ENCODE measurements at regions of chr12 and their contacts with region 1.

Region 1: DNA sequence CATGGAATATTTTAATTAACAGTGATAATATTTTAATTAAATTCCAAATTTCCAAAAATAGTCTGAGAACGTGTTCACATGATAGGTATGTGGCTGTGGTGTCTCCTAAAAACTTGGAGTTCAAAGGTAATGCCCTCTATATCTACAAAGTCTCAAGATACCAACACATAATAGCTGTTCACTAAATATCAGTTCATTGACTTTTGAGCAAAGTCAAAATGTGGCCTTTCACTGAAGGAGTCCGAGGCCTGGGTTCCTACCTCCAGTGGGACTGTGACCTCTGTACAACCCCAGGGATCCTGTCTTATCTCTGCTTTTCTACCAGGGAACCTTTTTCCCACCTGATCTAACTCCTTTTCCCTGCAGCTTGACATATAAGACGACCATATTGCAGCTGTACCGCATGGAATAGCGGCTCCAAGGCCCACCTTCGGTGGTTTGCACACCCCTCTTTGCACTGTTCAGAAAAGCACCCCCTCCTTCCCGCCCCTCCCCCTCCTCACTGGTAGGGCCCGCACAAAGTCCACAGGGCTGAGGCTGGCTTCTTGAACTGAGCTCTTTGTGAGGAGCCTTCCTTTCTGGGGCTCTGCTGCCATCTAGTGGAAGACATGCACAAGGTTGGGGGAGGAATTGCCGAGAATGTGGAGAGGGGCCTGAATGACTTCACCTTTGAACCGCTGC is 3.1 kb downstream of the CCND2 start:
- DNase-seq: peak; percentile 94 to 95
- H3K4me3 ChIP-seq: no peak overlapping the region
- H3K4me3 Mint-ChIP-seq: peak overlapping the region; percentile 98
- H3K27ac Mint-ChIP-seq: peak overlapping the region; percentile 94
- H3K4me1 ChIP-seq: peaks cover 46% of the 10 kb centered on the region
- H3K4me1 Mint-ChIP-seq: peaks cover 52% of the 10 kb centered on the region
- H3K27me3 ChIP-seq: peaks cover 13% of the 10 kb centered on the region
- H3K27me3 Mint-ChIP-seq: peaks cover 24% of the 10 kb centered on the region
- CTCF ChIP-seq: peak; percentile 97 to 98

Region 2: DNA sequence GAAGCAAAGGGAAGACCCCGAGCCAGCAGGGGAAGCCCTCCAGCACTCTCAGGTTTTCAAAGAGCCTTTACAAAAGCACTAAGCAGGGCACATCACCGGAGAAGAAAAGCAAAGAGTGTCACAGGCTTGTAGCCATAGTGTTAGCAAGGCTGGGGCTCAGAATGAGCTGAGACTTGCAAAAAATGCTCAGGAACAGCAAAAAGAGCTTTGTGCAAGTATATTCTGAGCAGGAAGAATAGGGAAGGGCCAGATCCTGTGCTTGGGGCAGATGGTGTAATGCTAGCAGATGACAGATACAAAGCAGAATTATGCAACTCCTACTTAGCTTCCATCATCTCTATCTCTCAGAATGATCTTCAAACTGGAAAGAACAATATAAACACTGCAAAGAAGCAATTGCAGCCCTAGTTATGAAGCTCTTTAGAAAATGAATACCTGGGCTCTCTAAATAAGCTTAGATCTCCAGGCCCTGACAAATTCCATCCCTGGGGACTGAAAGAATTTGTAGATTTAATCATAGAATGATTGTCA is 379.8 kb before region 1 on chr12:
- CTCF ChIA-PET with region 1: interaction called, 17 read pairs
- POLR2A ChIA-PET with region 1: no interaction called
- intact Hi-C with region 1: no loop called
- DNase-seq: peak; percentile 71 to 77
- H3K4me3 ChIP-seq: no peak overlapping the region
- H3K4me3 Mint-ChIP-seq: no peak overlapping the region
- H3K27ac Mint-ChIP-seq: peak overlapping the region; percentile 57
- H3K4me1 ChIP-seq: peaks cover 42% of the 10 kb centered on the region
- H3K4me1 Mint-ChIP-seq: peaks cover 22% of the 10 kb centered on the region
- H3K27me3 ChIP-seq: no peaks in the 10 kb centered on the region
- H3K27me3 Mint-ChIP-seq: no peaks in the 10 kb centered on the region
- CTCF ChIP-seq: no peak

Region 3: DNA sequence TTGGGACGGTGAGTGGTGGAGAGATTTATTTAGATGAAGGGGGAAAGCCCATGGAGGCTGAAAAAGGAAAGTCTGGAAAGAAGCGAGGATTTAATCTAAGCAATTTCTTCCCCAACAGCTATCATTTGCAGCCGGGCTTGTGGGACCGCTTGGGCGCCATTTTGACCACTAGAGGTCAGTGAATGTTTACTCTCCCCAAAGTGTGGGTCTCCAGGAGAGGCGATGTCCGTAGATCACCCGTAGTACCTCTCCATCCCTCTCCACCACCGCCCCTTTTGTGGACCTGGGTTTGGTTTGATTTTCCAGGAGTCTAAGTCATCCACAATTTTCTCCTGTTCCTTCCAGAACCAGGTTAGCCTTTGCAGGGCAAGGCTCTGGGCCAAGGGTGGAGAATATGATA is 312.2 kb before region 1 on chr12:
- CTCF ChIA-PET with region 1: interaction called, 13 read pairs
- POLR2A ChIA-PET with region 1: no interaction called
- intact Hi-C with region 1: loop called (anchors 1 kb)
- DNase-seq: peak; percentile 58 to 61
- H3K4me3 ChIP-seq: no peak overlapping the region
- H3K4me3 Mint-ChIP-seq: no peak overlapping the region
- H3K27ac Mint-ChIP-seq: no peak overlapping the region
- H3K4me1 ChIP-seq: peaks cover 64% of the 10 kb centered on the region
- H3K4me1 Mint-ChIP-seq: peaks cover 61% of the 10 kb centered on the region
- H3K27me3 ChIP-seq: no peaks in the 10 kb centered on the region
- H3K27me3 Mint-ChIP-seq: no peaks in the 10 kb centered on the region
- CTCF ChIP-seq: peak; percentile 51 to 74

Region 4: DNA sequence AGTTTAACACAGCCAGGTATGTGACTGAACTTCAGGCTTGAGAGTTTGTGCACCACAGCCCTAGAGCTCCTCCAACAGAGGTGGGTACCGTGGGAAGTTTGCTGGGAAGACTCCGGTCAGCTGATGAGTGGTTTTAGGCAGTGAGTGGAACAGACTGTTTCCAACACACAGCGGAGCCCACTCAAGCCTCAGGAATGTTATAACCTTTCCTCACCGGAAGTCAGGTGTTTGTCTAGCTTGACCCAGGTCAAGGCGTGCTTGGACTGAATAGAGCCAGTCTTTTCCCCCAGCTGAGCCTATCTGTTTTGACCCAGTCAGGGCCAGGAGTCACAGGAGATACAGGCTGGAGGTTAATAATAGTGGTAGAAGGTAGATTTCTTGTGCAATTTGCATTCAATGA is 265.1 kb before region 1 on chr12:
- CTCF ChIA-PET with region 1: interaction called, 18 read pairs
- POLR2A ChIA-PET with region 1: interaction called, 3 read pairs
- intact Hi-C with region 1: loop called (anchors 1 kb)
- DNase-seq: peak; percentile 86 to 91
- H3K4me3 ChIP-seq: no peak overlapping the region
- H3K4me3 Mint-ChIP-seq: peak overlapping the region; percentile 12
- H3K27ac Mint-ChIP-seq: peak overlapping the region; percentile 35
- H3K4me1 ChIP-seq: peaks cover 68% of the 10 kb centered on the region
- H3K4me1 Mint-ChIP-seq: peaks cover 57% of the 10 kb centered on the region
- H3K27me3 ChIP-seq: no peaks in the 10 kb centered on the region
- H3K27me3 Mint-ChIP-seq: no peaks in the 10 kb centered on the region
- CTCF ChIP-seq: no peak

Region 5: DNA sequence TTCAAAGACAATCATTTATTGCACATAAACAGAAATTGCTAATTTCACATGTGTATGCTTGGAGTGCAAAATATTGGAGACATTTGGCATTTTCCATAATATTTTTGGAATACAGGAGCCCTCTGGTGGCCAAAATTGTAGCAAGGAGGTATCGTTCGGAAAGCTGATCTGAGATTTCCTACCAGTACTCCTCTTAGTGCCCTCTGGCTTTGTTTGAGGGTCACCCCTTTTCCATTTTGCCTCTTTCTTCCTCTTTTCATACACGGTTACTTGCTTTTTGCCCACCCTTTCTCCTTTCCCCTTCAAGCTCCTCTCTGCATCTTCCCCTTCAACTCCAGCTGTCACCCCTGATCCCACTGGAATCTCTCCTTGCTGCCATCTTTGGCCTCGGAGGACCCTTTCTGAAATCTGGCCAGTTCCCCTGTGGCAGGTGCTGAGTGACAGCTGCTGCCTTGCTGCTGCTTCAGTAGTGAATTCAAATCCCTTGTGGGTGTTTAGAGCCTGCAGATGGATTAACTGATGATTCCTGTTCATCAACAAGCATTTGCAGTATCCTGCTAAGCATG is 238.8 kb before region 1 on chr12:
- CTCF ChIA-PET with region 1: interaction called, 50 read pairs
- POLR2A ChIA-PET with region 1: no interaction called
- intact Hi-C with region 1: loop called (anchors 1 kb)
- DNase-seq: peak; percentile 54 to 82
- H3K4me3 ChIP-seq: no peak overlapping the region
- H3K4me3 Mint-ChIP-seq: no peak overlapping the region
- H3K27ac Mint-ChIP-seq: no peak overlapping the region
- H3K4me1 ChIP-seq: peaks cover 36% of the 10 kb centered on the region
- H3K4me1 Mint-ChIP-seq: peaks cover 38% of the 10 kb centered on the region
- H3K27me3 ChIP-seq: no peaks in the 10 kb centered on the region
- H3K27me3 Mint-ChIP-seq: no peaks in the 10 kb centered on the region
- CTCF ChIP-seq: peak; percentile 89 to 95

Region 6: DNA sequence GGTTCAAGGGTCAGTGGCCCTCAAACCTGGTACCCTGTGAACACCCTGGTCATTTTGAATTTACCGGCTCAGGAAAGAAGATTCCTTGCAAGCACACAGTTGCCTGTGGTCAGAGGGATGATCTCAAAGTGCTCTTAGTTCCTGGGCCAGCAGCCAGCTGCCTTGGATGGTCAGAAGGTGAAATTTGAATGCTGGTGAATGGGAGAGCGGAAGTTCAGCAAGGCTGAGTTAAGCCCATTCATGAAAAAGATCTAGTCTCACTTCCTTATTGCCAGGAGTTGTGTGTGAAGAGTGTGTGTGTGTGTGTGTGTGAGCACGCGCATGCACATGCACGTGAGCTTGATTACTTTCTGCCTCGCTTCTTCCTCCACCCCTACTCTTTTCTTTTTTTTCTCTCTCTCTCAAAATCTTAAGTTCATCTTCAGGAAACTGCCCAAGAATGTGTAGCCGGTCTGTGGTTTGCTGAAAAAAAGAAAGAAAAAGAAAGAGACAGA is 158.6 kb before region 1 on chr12:
- CTCF ChIA-PET with region 1: interaction called, 29 read pairs
- POLR2A ChIA-PET with region 1: no interaction called
- intact Hi-C with region 1: no loop called
- DNase-seq: no peak
- H3K4me3 ChIP-seq: no peak overlapping the region
- H3K4me3 Mint-ChIP-seq: no peak overlapping the region
- H3K27ac Mint-ChIP-seq: no peak overlapping the region
- H3K4me1 ChIP-seq: peaks cover 14% of the 10 kb centered on the region
- H3K4me1 Mint-ChIP-seq: peaks cover 13% of the 10 kb centered on the region
- H3K27me3 ChIP-seq: no peaks in the 10 kb centered on the region
- H3K27me3 Mint-ChIP-seq: peaks cover 16% of the 10 kb centered on the region
- CTCF ChIP-seq: no peak

Region 7: DNA sequence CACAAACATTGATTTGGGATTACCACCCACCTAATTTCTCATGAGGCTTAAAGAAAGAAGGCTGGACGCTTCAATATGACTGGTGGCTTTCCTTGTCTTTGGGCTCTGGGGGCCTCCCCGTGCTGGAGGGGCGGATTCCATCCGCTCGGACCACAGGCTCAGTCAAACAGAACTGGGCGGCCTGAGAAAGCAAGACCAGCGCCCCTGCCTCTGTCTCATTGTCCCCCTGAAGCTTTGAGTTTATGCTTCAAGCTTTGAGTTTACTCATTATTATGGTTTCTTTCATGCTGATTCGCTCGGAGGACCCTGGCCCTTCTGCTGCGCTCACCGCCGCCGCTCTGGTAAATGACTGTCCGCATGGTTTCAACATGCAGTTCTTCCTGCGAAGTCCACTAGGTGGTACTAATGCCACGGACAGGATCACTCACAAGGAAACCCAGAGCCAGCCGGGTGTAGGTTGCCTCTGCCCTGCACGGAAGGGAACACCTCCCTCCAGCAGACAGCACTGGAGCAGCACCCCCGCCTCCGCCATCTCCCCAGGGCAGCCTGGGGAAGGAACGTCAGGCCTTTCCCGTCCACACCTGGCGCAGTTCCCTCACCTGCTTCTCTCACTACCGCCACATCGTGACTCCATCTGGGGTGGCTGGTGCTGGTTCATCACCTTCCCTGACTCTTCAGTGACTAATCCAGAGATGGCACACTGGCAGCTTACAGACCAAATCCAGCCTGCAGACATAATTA is 31.1 kb after region 1 on chr12:
- CTCF ChIA-PET with region 1: interaction called, 11 read pairs
- POLR2A ChIA-PET with region 1: interaction called, 3 read pairs
- intact Hi-C with region 1: no loop called
- DNase-seq: peak; percentile 95 to 97
- H3K4me3 ChIP-seq: peak overlapping the region; percentile 28
- H3K4me3 Mint-ChIP-seq: peak overlapping the region; percentile 69
- H3K27ac Mint-ChIP-seq: peak overlapping the region; percentile 98
- H3K4me1 ChIP-seq: peaks cover 34% of the 10 kb centered on the region
- H3K4me1 Mint-ChIP-seq: peaks cover 43% of the 10 kb centered on the region
- H3K27me3 ChIP-seq: no peaks in the 10 kb centered on the region
- H3K27me3 Mint-ChIP-seq: no peaks in the 10 kb centered on the region
- CTCF ChIP-seq: peak; percentile 91 to 92

Region 8: GRCh38 chr12:4417455-4417854 is 140.8 kb after region 1 on chr12:
- CTCF ChIA-PET with region 1: no interaction called
- POLR2A ChIA-PET with region 1: no interaction called
- intact Hi-C with region 1: no loop called
- DNase-seq: no peak
- H3K4me3 ChIP-seq: no peak overlapping the region
- H3K4me3 Mint-ChIP-seq: no peak overlapping the region
- H3K27ac Mint-ChIP-seq: no peak overlapping the region
- H3K4me1 ChIP-seq: 0 out of 2 replicates have a peak, but pooled peaks cover 4% of the 10 kb centered on the region
- H3K4me1 Mint-ChIP-seq: no peaks in the 10 kb centered on the region
- H3K27me3 ChIP-seq: peaks cover 1% of the 10 kb centered on the region
- H3K27me3 Mint-ChIP-seq: peaks cover 17% of the 10 kb centered on the region
- CTCF ChIP-seq: no peak

Measured in Caco-2 (cell line).